ENCODE measurements at regions of chr7 and their contacts with region 1.

Region 1: DNA sequence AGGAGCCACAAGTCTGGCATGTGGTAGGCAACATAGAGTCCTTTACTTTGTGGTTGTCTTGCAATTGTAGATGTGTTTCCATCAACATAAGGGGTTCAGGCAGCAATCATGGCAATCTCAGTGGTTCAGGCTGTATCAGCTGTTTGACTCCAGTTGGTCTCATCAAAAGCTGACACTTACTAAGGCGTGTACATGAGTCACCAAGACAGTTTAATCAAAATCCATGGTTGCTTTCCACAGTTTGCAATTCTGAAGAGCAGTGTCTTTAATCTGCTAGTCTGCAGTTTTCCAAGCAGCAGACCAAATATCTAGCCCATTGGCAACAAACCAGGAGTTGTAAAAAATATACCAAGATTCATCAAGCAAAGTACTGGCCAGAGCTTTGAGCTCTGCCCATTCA is 210.2 kb downstream of the MDFIC start:
- DNase-seq: no peak
- H3K4me3 ChIP-seq: no peak overlapping the region
- H3K4me3 Mint-ChIP-seq: no peak overlapping the region
- H3K27ac ChIP-seq: no peak overlapping the region
- H3K27ac Mint-ChIP-seq: no peak overlapping the region
- H3K4me1 ChIP-seq: peaks cover 16 to 23% of the 10 kb centered on the region in 2 donors
- H3K4me1 Mint-ChIP-seq: peaks cover 19% of the 10 kb centered on the region
- H3K27me3 ChIP-seq: no peaks in the 10 kb centered on the region
- H3K27me3 Mint-ChIP-seq: no peaks in the 10 kb centered on the region
- CTCF ChIP-seq: no peak

Region 2: DNA sequence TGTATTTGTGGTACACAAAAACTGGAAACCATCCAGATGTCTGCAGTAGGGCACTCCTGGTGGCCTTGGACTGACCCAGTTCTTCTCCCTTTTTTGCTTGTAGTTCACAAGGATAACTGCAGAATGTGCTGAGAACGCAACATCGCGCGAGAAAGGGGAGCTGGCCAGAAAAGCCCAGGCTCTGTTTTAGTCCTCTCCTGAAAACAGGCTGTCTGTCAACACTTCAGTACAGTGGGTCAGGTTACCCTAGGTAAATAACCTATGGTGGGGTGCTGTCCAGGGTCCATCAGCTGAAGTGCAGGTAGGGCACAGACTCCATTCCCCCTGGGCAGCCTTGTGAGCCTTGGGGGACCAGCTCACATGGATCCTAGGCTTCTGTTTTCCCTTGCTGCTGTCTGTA is 285.6 kb after region 1 on chr7:
- intact Hi-C with region 1: loop called in 1 of 2 experiments (anchors 5 kb)
- DNase-seq: no peak
- H3K4me3 ChIP-seq: no peak overlapping the region
- H3K4me3 Mint-ChIP-seq: no peak overlapping the region
- H3K27ac ChIP-seq: no peak overlapping the region
- H3K27ac Mint-ChIP-seq: no peak overlapping the region
- H3K4me1 ChIP-seq: no peaks in the 10 kb centered on the region
- H3K4me1 Mint-ChIP-seq: no peaks in the 10 kb centered on the region
- H3K27me3 ChIP-seq: no peaks in the 10 kb centered on the region
- H3K27me3 Mint-ChIP-seq: peaks cover 0 to 2% (median 0%) of the 10 kb centered on the region in 3 donors
- CTCF ChIP-seq: no peak

Measured in CD14-positive monocyte (primary cell).